Activated CD4-positive, alpha-beta memory T cell treated with anti-CD3 and anti-CD28 coated beads for 36 hours (primary cell): ENCODE measurements at regions of chr22 and their contacts with region 1.

Region 1: GRCh38 chr22:25672289-25673084 is 69.5 kb upstream of the MYO18B start:
- DNase-seq: no peak
- H3K4me3 Mint-ChIP-seq: no peak overlapping the region
- H3K27ac Mint-ChIP-seq: no peak overlapping the region
- H3K4me1 Mint-ChIP-seq: peaks cover 13% of the 10 kb centered on the region
- H3K27me3 Mint-ChIP-seq: no peaks in the 10 kb centered on the region

Region 2: GRCh38 chr22:25488244-25489020 is 184.1 kb before region 1 on chr22:
- CTCF ChIA-PET with region 1: no interaction called
- POLR2A ChIA-PET with region 1: no interaction called
- intact Hi-C with region 1: loop called (anchors 1 kb)
- DNase-seq: peak; percentile 75
- H3K4me3 Mint-ChIP-seq: no peak overlapping the region
- H3K27ac Mint-ChIP-seq: no peak overlapping the region
- H3K4me1 Mint-ChIP-seq: peaks cover 43% of the 10 kb centered on the region
- H3K27me3 Mint-ChIP-seq: no peaks in the 10 kb centered on the region

Region 3: DNA sequence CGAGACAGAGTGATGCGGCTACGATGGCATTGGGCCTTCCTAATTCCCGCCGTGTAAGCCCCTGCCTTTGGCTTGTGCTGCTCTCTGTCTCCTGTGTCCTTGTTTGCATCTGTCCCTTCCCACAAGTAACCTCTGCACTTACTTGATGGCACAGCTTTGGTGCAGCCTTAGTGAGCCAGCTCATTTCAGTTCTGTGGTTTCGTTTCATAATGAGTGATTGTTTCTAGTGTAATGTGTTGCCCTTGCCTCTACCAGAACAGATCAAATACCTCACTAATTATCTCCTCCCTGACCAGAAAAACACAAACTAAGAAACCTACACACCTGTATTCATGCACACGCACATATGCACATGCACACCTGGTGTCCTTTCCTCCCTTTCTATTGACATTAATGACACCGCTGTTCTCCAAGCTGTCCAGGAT is 49.2 kb before region 1 on chr22:
- CTCF ChIA-PET with region 1: no interaction called
- POLR2A ChIA-PET with region 1: no interaction called
- intact Hi-C with region 1: loop called (anchors 1 kb)
- DNase-seq: peak; percentile 52
- H3K4me3 Mint-ChIP-seq: no peak overlapping the region
- H3K27ac Mint-ChIP-seq: peak overlapping the region; percentile 47
- H3K4me1 Mint-ChIP-seq: peaks cover 16% of the 10 kb centered on the region
- H3K27me3 Mint-ChIP-seq: peaks cover 8% of the 10 kb centered on the region

Region 4: GRCh38 chr22:25878933-25879332 is 206.4 kb after region 1 on chr22:
- CTCF ChIA-PET with region 1: no interaction called
- POLR2A ChIA-PET with region 1: no interaction called
- intact Hi-C with region 1: no loop called
- DNase-seq: no peak
- H3K4me3 Mint-ChIP-seq: no peak overlapping the region
- H3K27ac Mint-ChIP-seq: no peak overlapping the region
- H3K4me1 Mint-ChIP-seq: no peaks in the 10 kb centered on the region
- H3K27me3 Mint-ChIP-seq: peaks cover 4% of the 10 kb centered on the region

Region 5: DNA sequence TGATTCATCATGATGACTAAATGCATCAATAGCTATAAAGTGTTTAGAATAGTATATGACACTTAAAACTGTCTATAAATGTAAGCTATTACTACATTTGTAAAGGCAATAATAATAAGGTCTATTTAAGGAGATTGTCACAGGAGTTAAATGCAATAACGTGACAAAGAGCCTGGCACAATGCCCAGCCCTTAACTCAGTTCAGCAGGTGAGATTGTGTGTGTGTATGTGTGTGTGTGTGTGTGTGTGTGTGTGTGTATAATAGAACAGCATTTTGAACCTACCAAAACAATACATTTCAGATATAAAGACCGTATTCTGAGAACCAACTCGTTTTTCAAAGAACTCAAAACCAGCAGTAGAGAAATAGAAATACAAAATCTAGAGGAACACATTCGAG is 247.0 kb after region 1 on chr22:
- CTCF ChIA-PET with region 1: no interaction called
- POLR2A ChIA-PET with region 1: no interaction called
- intact Hi-C with region 1: no loop called
- DNase-seq: no peak
- H3K4me3 Mint-ChIP-seq: no peak overlapping the region
- H3K27ac Mint-ChIP-seq: no peak overlapping the region
- H3K4me1 Mint-ChIP-seq: no peaks in the 10 kb centered on the region
- H3K27me3 Mint-ChIP-seq: peaks cover 16% of the 10 kb centered on the region